ENCODE measurements at regions of chr10 and their contacts with region 1.

Region 1: DNA sequence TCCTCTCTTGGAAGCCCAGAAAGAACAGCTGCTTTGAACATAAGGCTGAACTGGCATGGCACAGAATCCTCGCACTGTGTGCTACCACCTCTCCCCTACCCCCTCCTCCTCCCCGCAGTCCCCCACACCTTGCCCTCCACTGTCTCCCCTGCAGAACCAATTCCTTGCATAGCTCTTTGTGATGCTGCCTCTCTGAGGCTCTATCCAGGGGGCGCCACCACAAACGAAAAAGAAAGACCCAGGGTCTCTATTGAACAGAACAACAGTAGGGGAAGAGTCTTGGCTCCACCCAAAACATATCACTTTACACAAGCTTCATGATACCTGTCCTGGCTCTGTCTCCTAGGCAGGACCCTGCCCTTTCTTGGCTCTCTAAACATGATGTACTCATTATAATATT is 26.2 kb upstream of the EBLN1 start:
- DNase-seq: peak; percentile 27
- ATAC-seq: no peak
- H3K4me3 Mint-ChIP-seq: no peak overlapping the region
- H3K27ac Mint-ChIP-seq: no peak overlapping the region
- H3K4me1 Mint-ChIP-seq: peaks cover 43% of the 10 kb centered on the region
- H3K27me3 Mint-ChIP-seq: peaks cover 3% of the 10 kb centered on the region

Region 2: DNA sequence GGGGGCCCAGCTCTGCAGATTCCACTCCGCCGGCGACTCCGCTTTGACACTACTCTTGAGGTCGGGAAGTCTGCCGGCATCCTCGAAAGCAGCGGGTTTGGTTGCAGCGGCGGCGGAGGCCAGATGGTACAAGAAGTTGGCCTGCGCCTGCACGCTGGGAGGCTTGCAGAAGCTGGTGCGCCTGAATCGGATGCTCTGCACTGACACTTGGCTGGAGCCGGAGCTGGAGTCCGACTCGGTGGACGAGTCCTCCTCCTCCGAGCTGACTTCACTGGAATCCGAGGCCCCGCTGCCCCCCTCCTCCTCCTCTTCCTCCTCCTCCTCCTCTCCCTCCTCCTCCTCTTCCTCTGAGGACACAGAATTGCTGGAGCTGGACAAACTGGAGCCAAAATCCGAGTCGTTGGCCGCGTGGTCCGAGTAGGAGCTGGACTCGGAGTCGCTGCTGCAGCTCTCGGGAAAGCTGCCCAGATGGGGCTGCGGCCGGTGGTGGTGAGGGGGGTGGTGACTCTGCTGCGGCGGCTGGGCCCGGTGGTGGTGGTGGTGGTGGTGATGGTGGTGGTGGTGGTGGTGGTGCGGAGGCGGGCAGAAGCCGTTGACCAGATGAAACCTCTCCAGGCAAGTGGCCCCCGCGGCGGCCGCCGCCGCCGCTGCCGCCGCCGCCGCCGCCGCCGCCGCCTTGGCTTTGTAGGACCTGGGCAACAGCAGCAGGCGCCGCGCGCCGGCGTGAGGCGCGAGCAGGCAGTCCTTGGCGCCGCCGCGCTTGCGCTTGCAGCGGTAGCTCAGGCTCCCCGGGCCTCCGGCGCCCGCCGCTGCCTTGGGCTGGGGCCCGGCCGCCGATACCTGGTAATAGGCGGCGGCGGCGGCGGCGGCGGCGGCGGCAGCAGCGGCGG is 727.5 kb before region 1 on chr10:
- CTCF ChIA-PET with region 1: no interaction called
- POLR2A ChIA-PET with region 1: no interaction called
- intact Hi-C with region 1: loop called in 1 of 2 experiments (anchors 5 kb)
- DNase-seq: peak; percentile 75
- ATAC-seq: peak; percentile 71
- H3K4me3 Mint-ChIP-seq: peak overlapping the region; percentile 78
- H3K27ac Mint-ChIP-seq: no peak overlapping the region
- H3K4me1 Mint-ChIP-seq: peaks cover 34% of the 10 kb centered on the region
- H3K27me3 Mint-ChIP-seq: peaks cover 68% of the 10 kb centered on the region

Region 3: GRCh38 chr10:21533467-21534279 is 710.3 kb before region 1 on chr10 and contains the start of gene MLLT10:
- CTCF ChIA-PET with region 1: no interaction called
- POLR2A ChIA-PET with region 1: no interaction called
- intact Hi-C with region 1: loop called in 1 of 2 experiments (anchors 5 kb)
- DNase-seq: peak; percentile 95
- ATAC-seq: peak; percentile 87
- H3K4me3 Mint-ChIP-seq: peak within 1 kb of the TSS; percentile 95
- H3K27ac Mint-ChIP-seq: peak within 1 kb of the TSS; percentile 98
- H3K4me1 Mint-ChIP-seq: peaks cover 18% of the 10 kb centered on the region
- H3K27me3 Mint-ChIP-seq: no peaks in the 10 kb centered on the region
- total RNA-seq, gene MLLT10: 33.8 to 34.1 TPM

Region 4: DNA sequence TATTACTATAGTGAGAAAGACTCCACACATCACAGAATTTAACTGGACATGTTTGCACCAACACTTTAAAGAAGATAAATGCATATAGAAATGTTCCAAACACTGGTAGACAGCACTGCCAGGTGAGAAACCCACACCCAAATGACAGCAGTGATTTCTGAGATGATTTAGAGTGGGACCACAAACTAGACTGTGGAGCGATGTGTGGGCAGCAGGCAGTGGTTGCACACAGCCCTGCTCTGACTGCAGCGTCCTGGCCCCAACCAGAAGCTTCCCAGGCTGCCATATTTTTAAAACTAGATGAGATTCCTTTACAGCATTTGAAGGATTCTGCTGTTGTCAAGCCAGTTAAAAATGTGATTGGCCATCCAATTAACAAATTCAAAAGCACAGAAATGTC is 24.5 kb after region 1 on chr10:
- CTCF ChIA-PET with region 1: no interaction called
- POLR2A ChIA-PET with region 1: no interaction called
- intact Hi-C with region 1: no loop called
- DNase-seq: peak; percentile 37
- ATAC-seq: peak; percentile 64
- H3K4me3 Mint-ChIP-seq: no peak overlapping the region
- H3K27ac Mint-ChIP-seq: no peak overlapping the region
- H3K4me1 Mint-ChIP-seq: peaks cover 3% of the 10 kb centered on the region
- H3K27me3 Mint-ChIP-seq: peaks cover 16% of the 10 kb centered on the region

Region 5: GRCh38 chr10:22308390-22308789 is 64.4 kb after region 1 on chr10:
- CTCF ChIA-PET with region 1: no interaction called
- POLR2A ChIA-PET with region 1: no interaction called
- intact Hi-C with region 1: loop called (anchors 1 kb)
- DNase-seq: peak; percentile 60
- ATAC-seq: peak; percentile 99
- H3K4me3 Mint-ChIP-seq: no peak overlapping the region
- H3K27ac Mint-ChIP-seq: no peak overlapping the region
- H3K4me1 Mint-ChIP-seq: peaks cover 10% of the 10 kb centered on the region
- H3K27me3 Mint-ChIP-seq: peaks cover 3% of the 10 kb centered on the region

Region 6: DNA sequence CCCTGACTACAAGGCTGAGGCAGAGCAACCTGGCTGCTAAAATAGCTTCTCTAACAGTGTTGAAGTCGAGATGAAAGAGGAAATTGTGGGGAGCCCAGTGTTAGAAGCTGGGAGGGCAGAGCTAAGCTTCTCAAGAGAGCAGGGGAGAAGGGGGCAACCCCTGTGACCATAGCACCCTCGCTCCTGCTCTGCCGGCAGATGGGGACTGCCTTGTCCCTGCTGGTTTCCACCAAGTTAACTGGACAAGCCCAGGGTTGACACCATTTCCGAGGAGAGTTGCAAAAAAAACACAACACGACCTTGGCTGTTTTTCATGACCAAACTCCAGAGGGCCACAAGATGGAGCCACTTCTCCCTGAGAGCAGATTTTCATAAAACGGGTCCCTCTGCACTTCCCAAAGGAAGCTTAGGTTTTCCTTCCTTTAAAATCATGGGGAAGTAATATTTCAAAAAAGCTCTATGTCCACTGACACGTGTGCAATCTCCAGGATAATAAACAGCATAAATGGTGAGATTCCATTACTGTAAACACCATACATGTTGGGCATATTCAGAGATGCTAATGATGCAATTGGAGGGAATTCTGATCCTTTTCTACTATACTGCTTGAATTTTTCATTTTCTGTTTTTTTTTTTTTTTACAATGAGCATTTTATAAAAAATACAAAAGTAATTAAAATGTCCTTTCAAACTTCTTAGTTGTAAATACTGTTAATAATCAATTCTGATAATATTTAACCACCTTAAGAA is 330.0 kb after region 1 on chr10:
- CTCF ChIA-PET with region 1: no interaction called
- POLR2A ChIA-PET with region 1: no interaction called
- intact Hi-C with region 1: loop called in 1 of 2 experiments (anchors 2 kb)
- DNase-seq: peak; percentile 37
- ATAC-seq: no peak
- H3K4me3 Mint-ChIP-seq: no peak overlapping the region
- H3K27ac Mint-ChIP-seq: no peak overlapping the region
- H3K4me1 Mint-ChIP-seq: peaks cover 46% of the 10 kb centered on the region
- H3K27me3 Mint-ChIP-seq: no peaks in the 10 kb centered on the region